ENCODE measurements at regions of chr5 and their contacts with region 1.

Region 1: DNA sequence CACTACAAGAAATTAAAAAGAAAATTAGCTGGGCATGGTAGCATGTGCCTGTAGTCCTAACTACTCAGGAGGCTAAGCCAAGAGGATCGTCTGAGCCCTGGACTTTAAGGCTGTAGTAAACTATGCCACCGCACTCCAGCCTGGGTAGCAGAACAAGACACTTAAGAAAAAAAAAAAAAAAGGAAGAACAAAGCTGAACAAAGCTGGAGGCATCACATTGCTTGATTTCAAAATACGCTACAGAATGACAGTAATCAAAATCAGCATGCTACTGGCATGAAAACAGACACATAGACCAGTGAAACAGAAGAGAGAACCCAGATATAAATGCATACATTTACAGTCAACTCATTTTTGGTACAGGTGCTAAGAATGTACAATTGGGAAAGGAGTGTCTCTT is 14.5 kb upstream of the OTULIN start:
- DNase-seq: no peak
- H3K4me3 ChIP-seq: no peak overlapping the region
- H3K27me3 ChIP-seq: peaks cover 5% of the 10 kb centered on the region
- CTCF ChIP-seq: no peak

Region 2: DNA sequence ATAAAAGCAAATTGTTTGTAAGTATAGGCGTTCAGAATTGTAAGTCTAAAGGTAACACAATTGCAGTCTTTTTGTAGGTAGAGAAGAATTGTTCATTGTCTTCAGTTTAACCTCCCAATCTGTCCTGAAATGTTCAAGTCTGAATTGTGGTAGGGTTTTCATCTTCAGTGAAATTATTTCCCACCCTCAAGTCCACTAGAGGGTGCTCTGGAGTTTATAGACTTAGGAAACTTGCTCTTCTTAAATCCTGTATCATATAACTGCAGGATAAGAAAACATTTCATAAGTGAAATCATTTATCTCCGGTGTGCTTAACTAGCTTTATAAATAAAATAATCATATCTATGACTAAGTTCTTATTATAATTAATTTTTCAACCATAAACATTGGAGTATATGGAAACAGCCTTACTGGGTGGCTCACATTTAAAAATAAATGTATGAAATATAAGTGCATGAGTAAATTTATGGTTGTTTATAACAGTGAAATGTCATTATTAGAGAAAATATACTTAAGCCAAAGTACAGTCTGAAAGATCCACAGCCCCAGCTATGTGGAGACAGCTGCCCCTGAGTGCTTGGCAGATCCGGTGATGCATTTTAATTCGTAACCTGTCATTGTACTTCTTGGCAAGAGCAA is 250.9 kb before region 1 on chr5:
- CTCF ChIA-PET with region 1: interaction called, 41 read pairs
- POLR2A ChIA-PET with region 1: no interaction called
- DNase-seq: no peak
- H3K4me3 ChIP-seq: no peak overlapping the region
- H3K27me3 ChIP-seq: no peaks in the 10 kb centered on the region
- CTCF ChIP-seq: peak; percentile 68

Region 3: DNA sequence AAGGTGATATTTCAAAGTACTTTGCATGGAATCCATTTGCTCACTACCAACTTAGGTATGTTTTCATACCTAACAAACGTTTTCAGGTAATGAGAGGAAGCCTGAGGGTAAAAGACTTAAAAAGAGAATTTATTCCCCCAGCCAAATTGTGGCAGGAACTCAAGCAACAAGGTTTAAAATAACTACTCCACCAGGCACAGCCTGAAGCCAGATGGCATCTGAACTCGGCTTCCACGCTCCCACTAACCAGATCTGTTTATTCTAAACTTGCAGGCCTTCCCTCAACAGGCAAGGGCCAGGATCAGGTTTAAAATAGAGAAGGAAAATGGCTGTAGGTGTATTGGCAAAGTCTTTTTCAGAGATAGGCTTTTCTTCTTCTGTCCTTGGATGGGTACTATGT is 103.9 kb after region 1 on chr5:
- CTCF ChIA-PET with region 1: no interaction called
- POLR2A ChIA-PET with region 1: no interaction called
- DNase-seq: no peak
- H3K4me3 ChIP-seq: no peak overlapping the region
- H3K27me3 ChIP-seq: no peaks in the 10 kb centered on the region
- CTCF ChIP-seq: no peak